ENCODE measurements at regions of chr12 and their contacts with region 1.

Region 1: DNA sequence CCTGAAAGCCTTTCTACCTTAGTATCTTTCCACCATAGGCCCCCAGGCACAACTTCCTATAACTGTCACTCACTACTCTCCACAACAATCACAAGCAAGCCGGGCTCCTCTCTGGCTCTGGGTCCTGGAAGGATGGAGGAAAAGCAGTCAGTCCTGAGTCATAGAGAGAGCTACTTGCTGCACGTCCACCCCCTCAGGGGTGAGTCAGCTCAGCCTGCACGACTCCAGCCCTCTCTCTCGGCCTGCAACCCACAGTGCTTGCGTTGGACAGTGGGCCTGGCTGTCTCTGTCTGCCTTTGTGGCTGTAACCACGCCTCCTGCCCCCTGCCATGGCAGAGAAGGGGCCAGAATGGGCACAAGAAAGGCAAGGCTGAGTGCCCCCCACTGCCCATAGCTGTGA is 154.1 kb upstream of the FKBP4 start:
- DNase-seq: peak; percentile 91
- H3K4me3 ChIP-seq: no peak overlapping the region
- CTCF ChIP-seq: no peak

Region 2: DNA sequence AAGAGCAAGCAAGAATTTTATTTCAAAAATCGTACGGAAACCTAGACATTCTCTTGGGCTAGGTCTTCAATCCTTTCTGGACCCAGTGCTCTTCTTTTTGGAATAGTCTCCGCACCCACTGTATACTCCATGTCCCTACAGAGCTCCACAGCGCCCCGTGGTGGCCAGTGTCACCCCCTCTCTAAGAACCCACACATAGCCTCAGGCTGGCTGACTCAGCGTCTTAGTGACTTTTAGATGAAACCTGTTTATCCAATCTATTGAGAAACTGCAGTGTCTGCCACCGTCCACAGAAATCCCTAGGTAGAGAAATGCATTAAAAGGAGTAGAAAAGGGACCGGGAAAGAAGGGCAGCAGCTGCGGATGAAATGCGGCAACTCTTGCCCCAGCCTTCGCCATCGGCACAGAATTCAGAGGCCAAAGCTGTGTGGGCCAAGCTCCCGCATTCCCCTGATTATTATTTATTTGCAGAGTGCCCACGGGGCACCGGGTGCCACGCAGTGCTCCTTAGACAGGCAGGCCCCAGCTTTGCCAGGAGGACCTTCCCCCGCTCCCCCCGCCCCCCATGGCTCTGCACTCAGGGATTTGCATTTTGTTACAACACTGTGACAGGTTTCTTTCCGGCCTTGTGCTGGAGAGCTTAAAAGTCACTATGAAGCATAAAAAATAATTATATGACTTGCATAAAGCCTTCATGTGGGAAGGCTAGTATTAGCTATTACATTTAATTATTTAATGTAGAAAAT is 16.0 kb before region 1 on chr12:
- CTCF ChIA-PET with region 1: interaction called, 11 read pairs
- POLR2A ChIA-PET with region 1: no interaction called
- DNase-seq: no peak
- H3K4me3 ChIP-seq: no peak overlapping the region
- CTCF ChIP-seq: peak; percentile 46